ENCODE measurements at regions of chr17 and their contacts with region 1.

Region 1: GRCh38 chr17:45161019-45161825 is 453 bp upstream of the HEXIM2 start:
- DNase-seq: peak; percentile 98
- ATAC-seq: peak; percentile 93
- H3K4me3 Mint-ChIP-seq: peak overlapping the region; percentile 99
- H3K27ac Mint-ChIP-seq: peak overlapping the region; percentile 99
- H3K4me1 Mint-ChIP-seq: peaks cover 42% of the 10 kb centered on the region
- H3K27me3 Mint-ChIP-seq: no peaks in the 10 kb centered on the region
- CTCF ChIP-seq: no peak

Region 2: DNA sequence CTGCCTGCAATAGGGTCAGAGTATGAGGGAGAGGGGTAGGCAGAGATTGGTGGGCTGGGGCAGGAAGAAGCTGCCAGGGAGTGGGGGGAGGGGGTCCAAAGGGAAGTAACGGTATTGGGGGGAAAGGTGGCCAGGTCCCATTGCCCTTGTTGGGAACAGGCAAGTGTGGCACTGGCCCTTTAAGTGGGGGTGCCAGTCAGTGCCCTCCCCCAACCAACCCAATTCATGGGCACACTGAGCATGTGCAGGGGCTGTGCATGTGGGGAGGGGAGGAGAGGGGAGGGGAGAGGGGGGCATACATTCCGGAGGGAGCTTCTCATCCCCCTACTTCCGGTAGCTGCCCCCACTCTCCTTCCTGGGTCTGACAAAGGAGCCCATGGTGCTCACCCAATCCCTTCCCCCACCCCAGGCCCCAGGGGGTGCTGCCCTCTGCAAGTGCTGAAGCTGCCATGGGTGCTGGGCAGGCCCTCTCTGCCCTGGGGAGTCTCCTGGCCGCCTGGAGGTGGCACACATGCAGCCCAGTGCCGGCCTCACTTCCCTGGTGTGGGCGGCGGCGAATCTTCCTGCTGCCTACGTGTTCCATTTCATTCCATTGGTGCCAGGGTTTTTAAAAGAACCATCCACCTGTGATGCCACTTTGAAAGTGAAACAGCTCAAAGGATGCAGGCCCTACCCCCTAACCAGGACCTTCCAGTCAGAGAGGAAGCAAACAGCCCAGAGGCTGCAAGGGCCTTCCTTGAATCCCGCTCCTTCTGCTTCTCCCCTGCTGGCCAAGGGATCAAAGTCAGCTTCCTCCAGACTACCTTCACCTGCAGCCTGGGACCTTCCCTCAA is 11.4 kb after region 1 on chr17:
- CTCF ChIA-PET with region 1: interaction called, 3 read pairs
- POLR2A ChIA-PET with region 1: interaction called, 84 read pairs
- intact Hi-C with region 1: loop called (anchors 1 kb)
- DNase-seq: peak; percentile 52
- ATAC-seq: peak; percentile 91
- H3K4me3 Mint-ChIP-seq: peak overlapping the region; percentile 80
- H3K27ac Mint-ChIP-seq: peak overlapping the region; percentile 93
- H3K4me1 Mint-ChIP-seq: peaks cover 14% of the 10 kb centered on the region
- H3K27me3 Mint-ChIP-seq: no peaks in the 10 kb centered on the region
- CTCF ChIP-seq: no peak

Region 3: GRCh38 chr17:45197555-45198334 is 36.5 kb after region 1 on chr17:
- CTCF ChIA-PET with region 1: interaction called, 18 read pairs
- POLR2A ChIA-PET with region 1: interaction called, 4 read pairs
- intact Hi-C with region 1: no loop called
- DNase-seq: peak; percentile 91
- ATAC-seq: peak; percentile 100
- H3K4me3 Mint-ChIP-seq: no peak overlapping the region
- H3K27ac Mint-ChIP-seq: no peak overlapping the region
- H3K4me1 Mint-ChIP-seq: peaks cover 4% of the 10 kb centered on the region
- H3K27me3 Mint-ChIP-seq: no peaks in the 10 kb centered on the region
- CTCF ChIP-seq: no peak

Region 4: DNA sequence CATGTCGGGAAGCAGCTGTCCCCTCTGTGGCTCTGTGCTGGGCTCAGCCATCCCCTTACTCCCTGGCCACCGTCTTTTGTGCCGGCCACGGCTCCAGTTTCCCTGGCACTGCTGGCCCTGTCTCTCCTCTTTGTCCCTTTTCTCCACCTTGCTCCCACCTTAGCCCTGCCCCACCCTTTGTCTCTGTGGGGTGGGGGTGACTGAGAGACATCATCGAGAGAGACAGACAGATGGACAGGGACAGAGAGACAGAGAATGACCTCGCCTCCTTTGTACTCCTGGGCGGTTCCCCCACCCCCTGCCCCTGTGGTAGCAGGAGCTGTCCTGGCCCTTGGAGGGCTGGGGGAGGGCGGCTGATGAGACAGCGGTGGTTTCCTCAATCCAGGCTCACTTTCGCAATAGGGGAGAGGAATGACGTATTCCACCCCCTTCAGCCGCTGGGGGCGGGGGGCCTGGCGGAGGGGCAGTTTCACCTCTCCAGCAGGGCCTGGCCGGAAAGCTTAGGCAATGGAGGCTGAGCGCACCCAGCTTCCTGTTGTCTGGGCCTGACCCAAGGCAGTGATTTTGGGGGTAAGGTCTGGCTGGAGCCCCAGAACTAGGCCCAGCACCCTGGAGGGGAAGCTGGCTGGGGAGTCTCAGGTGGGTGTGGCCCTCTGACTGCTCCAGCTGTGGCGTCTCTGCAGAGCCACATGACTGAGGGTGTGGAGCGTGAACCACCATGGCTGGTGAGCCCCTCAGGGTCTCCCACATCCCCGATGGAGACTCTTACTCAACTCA is 67.7 kb after region 1 on chr17:
- CTCF ChIA-PET with region 1: interaction called, 3 read pairs
- POLR2A ChIA-PET with region 1: interaction called, 26 read pairs
- intact Hi-C with region 1: no loop called
- DNase-seq: peak; percentile 84
- ATAC-seq: peak; percentile 45
- H3K4me3 Mint-ChIP-seq: peak overlapping the region; percentile 79
- H3K27ac Mint-ChIP-seq: peak overlapping the region; percentile 99
- H3K4me1 Mint-ChIP-seq: peaks cover 97% of the 10 kb centered on the region
- H3K27me3 Mint-ChIP-seq: no peaks in the 10 kb centered on the region
- CTCF ChIP-seq: no peak

Region 5: GRCh38 chr17:45247429-45248131 is 86.4 kb after region 1 on chr17:
- CTCF ChIA-PET with region 1: no interaction called
- POLR2A ChIA-PET with region 1: interaction called, 9 read pairs
- intact Hi-C with region 1: loop called (anchors 5 kb)
- DNase-seq: peak; percentile 87
- ATAC-seq: peak; percentile 92
- H3K4me3 Mint-ChIP-seq: peak overlapping the region; percentile 90
- H3K27ac Mint-ChIP-seq: peak overlapping the region; percentile 92
- H3K4me1 Mint-ChIP-seq: peaks cover 34% of the 10 kb centered on the region
- H3K27me3 Mint-ChIP-seq: no peaks in the 10 kb centered on the region
- CTCF ChIP-seq: no peak